HepG2 (cell line): ENCODE measurements at regions of chr1 and their contacts with region 1.

Region 1: GRCh38 chr1:46179138-46180081 is 3.1 kb upstream of the P3R3URF start:
- DNase-seq: peak; percentile 78
- ATAC-seq: peak; percentile 80
- H3K4me3 ChIP-seq: no peak overlapping the region
- H3K27ac ChIP-seq: no peak overlapping the region
- H3K4me1 ChIP-seq: peaks cover 67% of the 10 kb centered on the region
- H3K27me3 ChIP-seq: peaks cover 0 to 3% of the 10 kb centered on the region in 2 experiments; a peak in 1 of 5 replicates
- CTCF ChIP-seq: peak; percentile 94
- EP300 ChIP-seq: no peak
- POLR2A ChIP-seq: no peak
- RAD21 ChIP-seq: peak; percentile 88

Region 2: DNA sequence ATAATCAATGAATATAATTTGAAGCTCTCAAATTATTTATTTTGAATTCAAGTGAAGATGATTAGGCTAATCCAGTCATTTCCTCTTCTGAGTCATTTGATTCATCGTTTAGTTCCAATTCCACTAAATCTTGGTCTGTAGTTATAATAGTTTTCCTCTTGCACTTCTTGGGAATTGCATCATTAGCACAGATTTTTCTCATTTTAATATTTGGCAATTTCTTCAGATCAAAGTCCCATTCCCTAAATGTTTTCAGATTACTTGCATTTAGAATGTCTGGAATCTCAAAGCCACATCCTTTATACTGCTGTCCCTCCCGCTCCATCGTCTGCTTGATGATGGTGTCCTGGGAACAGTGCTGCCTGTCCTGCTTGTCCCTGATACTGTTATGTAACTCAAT is 332.5 kb before region 1 on chr1:
- CTCF ChIA-PET with region 1: no interaction called
- POLR2A ChIA-PET with region 1: no interaction called
- in situ Hi-C with region 1: no loop called
- intact Hi-C with region 1: loop called (anchors 5 kb)
- DNase-seq: no peak
- ATAC-seq: no peak
- H3K4me3 ChIP-seq: no peak overlapping the region
- H3K27ac ChIP-seq: no peak overlapping the region
- H3K4me1 ChIP-seq: peaks cover 27% of the 10 kb centered on the region
- H3K27me3 ChIP-seq: no peaks in the 10 kb centered on the region
- CTCF ChIP-seq: no peak
- EP300 ChIP-seq: no peak
- POLR2A ChIP-seq: no peak
- RAD21 ChIP-seq: no peak

Region 3: DNA sequence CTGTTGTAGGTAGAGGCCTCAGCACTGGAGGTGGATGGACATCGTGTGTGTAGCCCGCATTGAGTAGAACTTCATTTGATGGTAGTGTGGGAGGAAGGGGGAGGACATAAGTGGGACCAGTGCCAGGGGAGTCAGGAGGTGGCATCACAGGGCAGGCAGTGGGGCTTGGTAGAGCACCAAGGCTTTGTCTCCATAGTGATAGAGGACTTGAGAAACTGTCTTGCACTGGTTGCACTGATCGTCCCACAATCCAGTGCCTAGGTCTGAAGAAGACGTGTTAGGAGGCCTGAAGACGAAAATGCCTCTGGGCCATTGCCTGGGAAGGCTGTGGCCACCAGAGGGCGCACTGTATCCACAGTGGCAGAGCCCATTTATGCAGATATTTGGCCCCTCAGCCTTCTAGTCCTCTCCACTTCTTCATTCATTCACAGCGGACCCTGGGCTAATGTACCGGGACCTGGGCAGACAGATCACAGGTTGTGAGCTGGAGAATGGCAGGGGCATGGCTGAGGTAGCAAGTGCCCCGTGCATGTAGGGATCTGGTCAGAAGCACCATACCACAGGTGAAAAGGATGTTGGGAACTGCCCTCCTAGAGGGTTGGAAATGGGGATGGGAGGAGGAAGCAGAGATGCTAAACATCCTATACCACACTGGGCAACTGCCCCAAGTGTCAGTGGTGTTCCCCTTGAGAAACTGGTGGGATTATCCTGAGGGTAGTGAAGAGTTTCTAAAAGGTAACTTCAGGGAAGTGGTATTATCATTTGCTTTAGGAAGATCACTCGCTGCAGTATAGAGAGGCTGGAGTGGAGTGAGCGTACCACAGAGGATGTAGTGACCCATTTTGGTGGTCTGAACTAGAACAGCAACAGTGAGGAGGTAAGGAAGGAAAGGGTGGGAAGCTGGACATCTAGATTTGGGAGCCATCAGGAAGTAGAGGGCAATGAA is 142.2 kb before region 1 on chr1:
- CTCF ChIA-PET with region 1: interaction called, 88 read pairs
- POLR2A ChIA-PET with region 1: no interaction called
- in situ Hi-C with region 1: loop called (anchors 5 kb)
- intact Hi-C with region 1: loop called (anchors 1 kb)
- DNase-seq: peak; percentile 55
- ATAC-seq: peak; percentile 73
- H3K4me3 ChIP-seq: no peak overlapping the region
- H3K27ac ChIP-seq: no peak overlapping the region
- H3K4me1 ChIP-seq: no peaks in the 10 kb centered on the region
- H3K27me3 ChIP-seq: no peaks in the 10 kb centered on the region; a peak in 1 of 5 replicates
- CTCF ChIP-seq: peak; percentile 96
- EP300 ChIP-seq: no peak
- POLR2A ChIP-seq: no peak
- RAD21 ChIP-seq: peak; percentile 92

Region 4: DNA sequence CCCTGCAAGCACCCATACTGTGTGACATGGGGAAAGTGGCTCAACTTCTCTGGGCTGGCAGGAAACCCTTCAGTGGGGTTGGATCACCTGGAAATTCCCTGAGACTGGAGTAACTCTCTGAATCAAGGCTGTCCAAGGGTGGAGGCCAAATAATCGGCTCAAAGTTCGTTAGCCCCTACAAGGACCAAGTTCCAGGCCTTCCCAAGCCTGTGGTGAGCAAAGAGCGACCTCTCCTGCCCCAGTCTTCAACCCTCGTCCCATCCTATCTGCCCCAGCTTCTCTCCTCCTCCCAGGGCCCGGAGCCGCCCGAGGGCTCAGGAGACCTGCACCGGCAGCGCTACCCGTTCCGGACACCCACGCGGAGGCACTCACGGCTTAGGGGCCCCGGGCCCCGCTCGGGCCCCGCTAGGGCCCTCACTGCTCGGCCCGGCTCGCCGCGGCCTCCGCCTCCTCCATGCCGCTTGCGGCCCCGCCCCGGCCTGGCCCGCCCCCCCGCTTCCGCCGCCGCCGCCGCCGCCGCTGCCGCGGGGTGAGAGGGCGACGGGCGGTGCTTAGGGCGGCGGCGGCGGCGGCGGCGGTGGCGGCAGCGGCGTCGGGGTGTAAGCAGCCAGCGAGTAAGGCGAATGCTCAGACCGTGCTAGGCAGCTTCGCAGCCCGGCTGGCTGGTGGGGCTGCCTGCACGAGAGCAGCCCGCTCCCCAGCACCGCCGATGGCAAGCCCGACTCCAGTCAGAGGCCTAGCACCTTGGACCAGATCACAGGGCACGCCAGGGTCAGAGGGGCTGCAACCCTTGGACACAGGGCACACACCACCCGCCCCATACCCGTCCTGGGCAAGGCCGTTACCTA is 18.8 kb after region 1 on chr1 and contains the start of gene POMGNT1:
- CTCF ChIA-PET with region 1: no interaction called
- POLR2A ChIA-PET with region 1: interaction called, 24 read pairs
- in situ Hi-C with region 1: no loop called
- intact Hi-C with region 1: loop called (anchors 2 kb)
- DNase-seq: peak; percentile 23
- ATAC-seq: peak; percentile 89
- H3K4me3 ChIP-seq: peak within 1 kb of the TSS; percentile 89 to 98 (median 93)
- H3K27ac ChIP-seq: peak within 1 kb of the TSS; percentile 78
- H3K4me1 ChIP-seq: peaks cover 31% of the 10 kb centered on the region
- H3K27me3 ChIP-seq: 0 out of 5 replicates have a peak, but pooled peaks cover 0 to under 1% of the 10 kb centered on the region in 2 experiments
- CTCF ChIP-seq: peak; percentile 67
- EP300 ChIP-seq: no peak
- POLR2A ChIP-seq: peak; percentile 82 to 86
- RAD21 ChIP-seq: 0 out of 2 replicates have a peak, but pooled peaks have one; percentile 14
- total RNA-seq, gene POMGNT1: 25.5 and 33.9 TPM in 2 replicates

Region 5: GRCh38 chr1:46223472-46223943 is 44.1 kb after region 1 on chr1:
- CTCF ChIA-PET with region 1: interaction called, 43 read pairs
- POLR2A ChIA-PET with region 1: interaction called, 4 read pairs
- in situ Hi-C with region 1: loop called (anchors 5 kb)
- intact Hi-C with region 1: loop called (anchors 1 kb)
- DNase-seq: peak; percentile 79
- ATAC-seq: peak; percentile 92
- H3K4me3 ChIP-seq: peak overlapping the region in 1 of 3 experiments; percentile 19; a peak in 1 of 6 replicates
- H3K27ac ChIP-seq: no peak overlapping the region
- H3K4me1 ChIP-seq: peaks cover 51% of the 10 kb centered on the region
- H3K27me3 ChIP-seq: no peaks in the 10 kb centered on the region
- CTCF ChIP-seq: peak; percentile 91
- EP300 ChIP-seq: no peak
- POLR2A ChIP-seq: no peak
- RAD21 ChIP-seq: peak; percentile 76; the same call in 1 of the 2 replicates